ENCODE measurements at regions of chr21 and their contacts with region 1.

Region 1: GRCh38 chr21:28745131-28746016 is 247.3 kb downstream of the LTN1 start:
- DNase-seq: peak; percentile 54
- CTCF ChIP-seq: peak; percentile 81

Region 2: DNA sequence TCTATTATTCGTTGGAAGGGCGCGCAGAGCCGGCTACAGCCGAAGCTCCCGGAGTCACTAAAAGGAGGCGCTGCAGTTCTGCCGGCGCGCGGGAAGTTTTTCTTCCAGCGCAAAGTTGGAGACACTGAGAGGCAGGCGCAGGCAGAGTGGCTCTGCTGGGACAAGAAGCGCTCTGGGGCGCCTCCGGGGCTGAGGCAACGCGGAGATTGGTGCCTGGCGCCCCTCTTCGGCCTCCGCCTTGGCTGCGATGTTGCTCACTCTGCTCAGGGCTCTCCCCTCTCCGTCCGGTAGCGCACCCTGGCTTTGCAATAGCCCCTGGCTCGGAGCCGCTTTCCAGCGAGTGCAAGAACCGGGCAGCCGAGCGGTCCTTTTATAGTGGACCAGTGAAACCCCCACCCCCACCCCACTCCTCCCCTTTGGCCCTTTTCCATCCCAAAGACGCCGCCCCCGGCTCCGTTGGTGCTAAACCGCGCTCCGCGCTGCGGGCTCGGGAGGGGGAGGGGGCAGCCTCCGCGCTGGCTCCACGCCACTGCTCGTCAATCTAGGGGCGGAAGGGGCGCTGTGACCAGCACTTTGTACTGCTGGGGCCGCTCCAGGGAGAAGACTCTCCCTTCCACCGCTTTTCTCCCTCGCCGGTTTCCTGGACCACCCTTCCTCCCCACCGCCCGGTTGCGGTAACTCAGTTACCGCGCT is 1900.2 kb before region 1 on chr21 and contains the start of gene ADAMTS1:
- CTCF ChIA-PET with region 1: interaction called, 46 read pairs
- POLR2A ChIA-PET with region 1: no interaction called
- DNase-seq: no peak
- CTCF ChIP-seq: no peak

Region 3: DNA sequence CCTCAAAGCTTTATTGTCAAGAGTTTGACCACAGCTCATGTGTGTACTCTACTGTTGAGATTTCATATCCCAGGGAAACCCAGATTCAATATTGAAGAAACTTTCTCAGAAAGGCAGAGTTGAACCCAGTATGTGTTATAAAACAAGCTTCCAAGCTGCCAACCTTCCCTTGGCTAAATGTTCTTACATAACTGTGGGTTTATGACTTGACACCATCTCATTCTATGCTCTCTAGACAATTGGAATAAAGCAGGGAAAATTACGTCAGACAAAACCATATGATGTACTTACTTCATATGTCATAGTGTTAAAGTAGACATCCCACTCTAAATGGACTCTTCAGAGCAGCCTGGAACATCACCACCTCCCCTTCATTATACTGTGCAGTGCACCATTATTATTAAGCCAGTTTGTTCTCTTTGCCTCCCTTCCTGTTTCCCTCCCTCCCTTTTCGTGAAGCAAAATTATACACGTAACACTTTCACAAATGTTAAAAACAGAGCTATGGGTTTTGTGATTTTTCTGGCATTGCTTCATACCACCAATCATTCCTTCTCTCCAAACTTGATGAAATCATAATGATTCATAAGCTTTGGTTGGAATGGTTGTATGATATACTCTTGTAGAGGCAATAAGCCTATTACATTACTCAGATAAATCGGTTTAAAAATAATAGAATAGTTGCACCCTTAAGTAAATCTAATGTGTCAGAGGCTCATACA is 259.9 kb before region 1 on chr21:
- CTCF ChIA-PET with region 1: no interaction called
- POLR2A ChIA-PET with region 1: no interaction called
- DNase-seq: no peak
- CTCF ChIP-seq: no peak

Region 4: GRCh38 chr21:28516991-28517592 is 228.3 kb before region 1 on chr21:
- CTCF ChIA-PET with region 1: interaction called, 88 read pairs
- POLR2A ChIA-PET with region 1: no interaction called
- DNase-seq: peak; percentile 56
- CTCF ChIP-seq: peak; percentile 76

Region 5: DNA sequence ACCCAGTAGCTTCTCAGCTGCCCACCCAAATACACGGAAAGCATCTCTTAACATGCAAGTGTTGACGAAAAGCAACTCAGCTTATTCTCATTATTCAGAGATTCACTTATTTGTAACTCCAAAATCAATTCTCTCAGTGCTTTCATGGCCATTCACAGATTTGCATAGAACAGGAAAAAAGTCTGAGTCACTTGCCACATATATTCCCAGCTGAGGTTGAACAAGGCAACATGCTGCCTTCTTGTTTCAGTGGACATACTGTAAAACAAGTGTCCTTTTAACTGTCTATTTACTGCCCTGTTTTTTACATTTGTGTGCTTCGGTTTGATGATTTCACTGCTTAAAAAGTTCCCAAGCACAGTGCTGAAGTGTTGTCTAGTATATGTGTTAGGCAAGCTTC is 25.7 kb before region 1 on chr21:
- CTCF ChIA-PET with region 1: interaction called, 17 read pairs
- POLR2A ChIA-PET with region 1: no interaction called
- DNase-seq: no peak
- CTCF ChIP-seq: no peak

Region 6: GRCh38 chr21:28761674-28762356 is 16.4 kb after region 1 on chr21:
- CTCF ChIA-PET with region 1: interaction called, 38 read pairs
- POLR2A ChIA-PET with region 1: no interaction called
- DNase-seq: no peak
- CTCF ChIP-seq: no peak

Region 7: DNA sequence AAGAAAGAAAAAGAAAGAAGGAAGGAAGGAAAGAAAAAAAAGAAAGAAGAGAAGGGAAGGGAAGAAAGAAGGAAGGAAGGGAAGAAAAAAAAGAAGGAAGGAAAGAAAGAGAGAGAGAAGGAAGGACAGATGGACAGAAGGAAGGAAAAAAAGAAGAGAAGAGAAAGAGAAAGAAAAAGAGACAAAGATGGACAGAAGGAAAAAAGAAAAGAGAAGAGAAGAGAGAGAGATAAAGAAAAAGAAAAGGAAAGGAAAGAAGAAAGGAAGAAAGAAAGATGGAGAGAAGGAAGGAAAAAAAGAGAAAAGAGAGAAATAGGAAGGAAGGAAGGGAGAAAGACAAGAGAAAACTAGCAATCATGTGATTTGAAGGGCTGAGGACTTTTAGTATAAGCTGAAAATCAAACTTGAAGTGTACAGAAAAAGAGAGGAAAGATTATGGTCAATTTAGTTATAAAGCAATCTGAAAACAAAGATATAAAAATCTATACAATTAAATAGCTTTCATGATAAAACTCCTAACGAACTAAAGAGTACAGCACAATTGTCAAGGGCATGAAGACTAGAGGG is 132.0 kb after region 1 on chr21:
- CTCF ChIA-PET with region 1: no interaction called
- POLR2A ChIA-PET with region 1: no interaction called
- DNase-seq: no peak
- CTCF ChIP-seq: no peak

Region 8: GRCh38 chr21:28936036-28936435 is 190.7 kb after region 1 on chr21:
- CTCF ChIA-PET with region 1: interaction called, 13 read pairs
- POLR2A ChIA-PET with region 1: no interaction called
- DNase-seq: no peak
- CTCF ChIP-seq: no peak

Measured in GM10248 (cell line).